ENCODE measurements at regions of chr6 and their contacts with region 1.

Region 1: GRCh38 chr6:16128759-16129622 is at the start of gene MYLIP:
- DNase-seq: peak; percentile 93
- ATAC-seq: peak; percentile 94
- H3K4me3 ChIP-seq: peak within 1 kb of the TSS; percentile 78 to 95 (median 95)
- H3K27ac ChIP-seq: peak within 1 kb of the TSS; percentile 67
- H3K4me1 ChIP-seq: peaks cover 26% of the 10 kb centered on the region
- H3K27me3 ChIP-seq: peaks cover 0 to 32% of the 10 kb centered on the region in 2 experiments; a peak in 3 of 5 replicates
- CTCF ChIP-seq: peak; percentile 94
- EP300 ChIP-seq: peak in 1 of 2 experiments; percentile 19; a peak in 1 of 4 replicates
- POLR2A ChIP-seq: peak; percentile 98 to 100
- RAD21 ChIP-seq: peak; percentile 86
- total RNA-seq, gene MYLIP: 3.4 and 4.0 TPM in 2 replicates

Region 2: DNA sequence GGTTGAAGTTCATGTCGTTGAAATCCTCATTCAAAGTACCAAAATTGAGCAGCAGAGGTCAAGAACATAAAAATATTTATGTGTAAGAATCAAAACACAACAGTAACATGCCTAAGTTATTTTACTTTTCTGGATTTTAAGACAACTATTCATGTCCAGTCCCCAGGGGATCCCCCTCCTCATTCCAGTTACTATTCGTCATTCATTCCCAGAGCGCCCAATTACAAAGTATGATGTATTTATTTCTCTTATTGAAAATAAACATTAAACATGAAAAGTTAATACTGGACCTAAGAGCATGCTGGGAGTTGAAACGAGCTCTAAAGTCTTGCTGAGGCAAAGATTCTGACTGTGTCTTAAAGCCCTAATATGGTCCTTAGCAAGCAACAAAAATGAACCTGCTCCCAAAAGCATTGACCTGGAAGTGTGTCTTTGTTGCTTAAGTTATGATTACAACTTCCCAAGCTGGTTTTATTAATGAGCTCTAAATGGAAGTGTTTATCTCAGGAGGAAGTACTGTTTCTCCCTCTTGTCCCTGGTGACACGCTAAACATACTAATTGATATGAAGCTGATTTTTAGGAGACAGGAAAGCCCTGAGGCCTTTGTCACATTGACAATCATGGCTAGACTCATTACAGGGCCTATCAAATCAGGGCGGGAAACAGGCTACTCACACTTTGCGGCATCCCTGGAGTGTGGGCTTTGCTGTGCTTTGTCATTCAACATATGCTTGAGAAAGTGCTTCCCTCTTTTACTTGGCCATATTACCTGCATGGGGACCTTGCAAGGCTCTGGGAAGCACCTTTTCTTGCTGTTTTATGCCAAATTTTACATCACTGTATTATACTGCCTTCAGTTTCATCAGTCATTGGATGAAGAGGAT is 273.9 kb before region 1 on chr6:
- CTCF ChIA-PET with region 1: no interaction called
- POLR2A ChIA-PET with region 1: no interaction called
- in situ Hi-C with region 1: no loop called
- intact Hi-C with region 1: no loop called
- DNase-seq: no peak
- ATAC-seq: no peak
- H3K4me3 ChIP-seq: no peak overlapping the region
- H3K27ac ChIP-seq: no peak overlapping the region
- H3K4me1 ChIP-seq: no peaks in the 10 kb centered on the region
- H3K27me3 ChIP-seq: no peaks in the 10 kb centered on the region; a peak in 1 of 5 replicates
- CTCF ChIP-seq: no peak
- EP300 ChIP-seq: no peak
- POLR2A ChIP-seq: no peak
- RAD21 ChIP-seq: no peak

Region 3: GRCh38 chr6:15955944-15956735 is 172.9 kb before region 1 on chr6:
- CTCF ChIA-PET with region 1: no interaction called
- POLR2A ChIA-PET with region 1: no interaction called
- in situ Hi-C with region 1: no loop called
- intact Hi-C with region 1: loop called (anchors 5 kb)
- DNase-seq: peak; percentile 44
- ATAC-seq: peak; percentile 45
- H3K4me3 ChIP-seq: peak overlapping the region in 1 of 3 experiments; percentile 29; a peak in 2 of 6 replicates
- H3K27ac ChIP-seq: no peak overlapping the region
- H3K4me1 ChIP-seq: peaks cover 21% of the 10 kb centered on the region
- H3K27me3 ChIP-seq: peaks cover 1 to 38% of the 10 kb centered on the region in 2 experiments; a peak in 4 of 5 replicates
- CTCF ChIP-seq: no peak
- EP300 ChIP-seq: no peak
- POLR2A ChIP-seq: no peak
- RAD21 ChIP-seq: no peak

Region 4: DNA sequence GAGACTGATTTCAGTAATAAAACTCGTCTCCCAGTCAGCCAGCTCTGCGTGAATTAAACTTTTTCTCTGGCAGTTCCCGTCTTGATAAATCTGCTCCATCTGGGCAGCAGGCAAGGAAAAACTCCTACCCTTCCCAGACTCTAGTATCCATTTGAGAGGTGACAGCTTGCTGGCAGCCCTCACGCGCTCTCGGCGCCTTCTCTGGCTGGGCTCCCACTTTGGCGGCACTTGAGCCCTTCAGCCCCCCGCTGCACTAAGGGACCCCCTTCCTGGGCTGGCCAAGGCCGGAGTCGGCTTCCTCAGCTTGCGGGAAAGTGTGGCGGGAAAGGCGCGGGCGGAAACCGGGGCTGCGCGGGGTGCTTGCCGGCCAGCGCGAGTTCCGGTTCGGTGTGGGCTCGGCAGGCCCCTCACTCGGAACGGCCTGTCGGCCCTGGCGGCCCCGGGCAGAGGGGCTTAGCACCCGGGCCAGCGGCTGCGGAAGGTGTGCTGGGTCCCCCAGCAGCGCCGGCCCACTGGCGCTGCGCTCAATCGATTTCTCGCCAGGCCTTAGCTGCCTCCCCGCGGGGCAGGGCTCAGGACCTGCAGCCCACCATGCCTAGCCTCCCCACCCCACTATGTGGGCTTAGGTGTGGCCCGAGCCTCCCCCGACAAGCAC is 87.6 kb after region 1 on chr6:
- CTCF ChIA-PET with region 1: no interaction called
- POLR2A ChIA-PET with region 1: no interaction called
- in situ Hi-C with region 1: no loop called
- intact Hi-C with region 1: no loop called
- DNase-seq: no peak
- ATAC-seq: no peak
- H3K4me3 ChIP-seq: no peak overlapping the region
- H3K27ac ChIP-seq: no peak overlapping the region
- H3K4me1 ChIP-seq: peaks cover 6% of the 10 kb centered on the region; the same call in 1 of the 2 replicates
- H3K27me3 ChIP-seq: peaks cover 6 to 14% of the 10 kb centered on the region in 2 experiments; a peak in 2 of 5 replicates
- CTCF ChIP-seq: no peak
- EP300 ChIP-seq: no peak
- POLR2A ChIP-seq: no peak
- RAD21 ChIP-seq: no peak

Measured in HepG2 (cell line).